H1 (cell line): ENCODE measurements at regions of chr1 and their contacts with region 1.

Region 1: DNA sequence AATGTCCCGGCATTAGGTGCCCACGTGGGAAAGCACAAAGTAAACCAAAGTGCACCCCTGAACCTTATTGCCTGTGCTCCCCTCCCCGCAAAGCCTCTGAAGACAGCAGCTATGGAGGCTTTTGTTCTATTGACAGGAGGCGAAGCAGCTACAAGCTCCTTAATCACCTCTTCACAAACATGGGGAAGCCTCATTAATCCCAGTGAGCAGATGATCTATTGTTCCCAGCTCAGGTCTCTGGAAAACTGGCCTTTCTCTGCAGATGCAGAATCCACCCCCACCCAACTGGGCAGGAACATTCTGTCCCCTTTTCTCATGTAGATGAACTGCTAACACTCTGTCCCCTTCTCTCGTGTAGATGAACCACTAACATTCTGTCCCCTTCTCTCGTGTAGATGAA is 190.5 kb upstream of the CSF3R start:
- DNase-seq: peak in 1 of 2 experiments; percentile 9
- H3K4me3 ChIP-seq: no peak overlapping the region
- H3K27ac ChIP-seq: no peak overlapping the region
- H3K4me1 ChIP-seq: peaks cover 3 to 7% (median 5%) of the 10 kb centered on the region in 4 experiments; a peak in 5 of 7 replicates
- H3K27me3 ChIP-seq: peaks cover 0 to 1% (median 0%) of the 10 kb centered on the region in 4 experiments; a peak in 3 of 7 replicates
- CTCF ChIP-seq: no peak
- EP300 ChIP-seq: no peak
- POLR2A ChIP-seq: no peak
- RAD21 ChIP-seq: no peak

Region 2: DNA sequence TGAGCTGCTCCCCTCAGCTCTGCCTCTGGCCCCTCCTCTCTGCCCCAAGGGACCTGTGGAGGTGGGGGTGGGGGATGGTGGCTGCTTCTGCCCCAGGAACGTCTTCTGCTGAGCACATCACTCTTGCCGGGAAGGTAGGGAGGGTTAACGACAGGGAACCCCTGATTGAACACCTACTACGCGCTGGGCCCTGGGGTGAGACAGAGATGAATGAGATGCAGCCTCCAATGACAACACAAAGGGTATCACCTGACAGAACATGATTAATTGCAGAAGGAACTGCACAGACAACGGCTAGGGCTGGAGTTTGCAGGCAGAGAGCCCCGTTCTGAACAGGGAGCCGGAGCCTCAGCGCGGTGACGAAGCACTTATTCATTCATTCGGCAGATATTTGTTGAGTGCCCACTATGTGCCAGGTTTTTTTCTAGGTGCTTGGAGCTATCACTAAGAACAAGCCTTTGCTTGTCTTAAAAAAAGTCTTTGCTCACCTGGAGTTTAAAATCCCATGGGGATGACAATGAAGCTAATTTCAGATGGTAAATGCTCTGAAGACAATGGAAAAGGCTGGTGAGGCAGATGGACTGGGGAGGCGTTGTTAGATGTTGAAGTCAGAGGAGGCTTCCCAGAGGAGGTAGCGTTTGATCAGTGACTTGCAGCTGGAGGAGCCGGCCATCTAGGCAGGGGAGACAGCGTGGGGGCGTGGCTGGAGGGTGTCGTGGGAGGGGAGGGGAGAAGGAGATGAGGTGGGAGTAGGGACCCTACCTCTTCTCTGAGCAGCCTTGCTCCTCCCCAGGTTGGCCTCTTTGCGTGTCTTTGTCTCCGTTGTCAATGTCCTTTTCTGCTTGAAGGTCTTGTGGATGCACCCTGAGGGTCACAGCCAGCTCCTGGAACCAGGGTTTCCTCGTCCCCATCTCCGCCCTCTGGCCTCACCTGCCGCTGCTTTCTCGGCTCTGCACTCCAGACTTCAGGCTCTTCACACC is 87.3 kb before region 1 on chr1:
- CTCF ChIA-PET with region 1: no interaction called
- POLR2A ChIA-PET with region 1: no interaction called
- DNase-seq: no peak
- H3K4me3 ChIP-seq: no peak overlapping the region
- H3K27ac ChIP-seq: no peak overlapping the region
- H3K4me1 ChIP-seq: peaks cover 12 to 38% (median 21%) of the 10 kb centered on the region in 4 experiments
- H3K27me3 ChIP-seq: no peaks in the 10 kb centered on the region; a peak in 1 of 7 replicates
- CTCF ChIP-seq: no peak
- EP300 ChIP-seq: no peak
- POLR2A ChIP-seq: no peak
- RAD21 ChIP-seq: no peak

Region 3: DNA sequence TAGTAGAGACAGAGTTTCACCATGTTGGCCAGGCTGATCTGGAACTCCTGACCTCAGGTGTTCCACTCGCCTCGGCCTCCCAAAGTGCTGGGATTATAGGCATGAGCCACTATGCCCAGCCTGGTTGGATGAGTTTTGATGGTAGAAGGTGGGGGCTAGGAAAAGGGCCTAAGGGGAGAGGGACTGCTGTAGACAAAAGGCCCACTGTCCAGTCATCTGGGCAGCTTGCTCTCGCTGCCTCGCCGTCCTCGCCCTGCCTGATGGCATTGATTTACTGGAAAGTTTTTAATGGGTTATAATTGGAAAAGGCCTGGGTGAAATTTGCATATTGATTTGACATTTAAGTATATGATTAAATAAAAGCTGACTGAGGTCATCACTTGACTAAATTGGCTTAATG is 15.4 kb before region 1 on chr1:
- CTCF ChIA-PET with region 1: interaction called, 12 read pairs
- POLR2A ChIA-PET with region 1: no interaction called
- DNase-seq: no peak
- H3K4me3 ChIP-seq: no peak overlapping the region
- H3K27ac ChIP-seq: no peak overlapping the region
- H3K4me1 ChIP-seq: no peaks in the 10 kb centered on the region; a peak in 1 of 7 replicates
- H3K27me3 ChIP-seq: no peaks in the 10 kb centered on the region; a peak in 3 of 7 replicates
- CTCF ChIP-seq: no peak
- EP300 ChIP-seq: no peak
- POLR2A ChIP-seq: no peak
- RAD21 ChIP-seq: no peak